SK-N-SH (cell line): ENCODE measurements at regions of chr3 and their contacts with region 1.

Region 1: DNA sequence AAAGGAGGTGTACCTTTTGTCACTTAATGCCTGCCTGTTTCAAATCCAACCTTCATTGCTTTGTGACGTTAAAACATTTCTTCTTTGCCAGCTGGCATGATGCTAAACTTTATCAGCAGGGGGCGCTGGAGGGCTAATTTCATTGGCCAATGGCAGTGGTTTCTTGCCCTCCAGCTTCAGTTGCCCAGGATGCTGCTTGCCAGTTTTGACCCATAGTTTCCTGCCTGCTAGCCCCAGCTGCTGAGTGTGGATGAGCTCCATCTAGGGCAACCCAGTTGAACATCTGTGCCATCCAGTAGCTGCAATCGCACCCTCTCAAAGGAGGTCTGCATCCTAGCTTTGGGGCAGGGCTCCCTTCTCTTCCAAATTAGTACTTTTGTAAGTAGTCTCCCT is 22.1 kb downstream of the ACKR2 start:
- DNase-seq: peak; percentile 57
- H3K4me3 ChIP-seq: peak overlapping the region in 1 of 2 experiments; percentile 28; a peak in 1 of 4 replicates
- H3K27ac ChIP-seq: no peak overlapping the region
- H3K4me1 ChIP-seq: peaks cover 0 to 3% of the 10 kb centered on the region in 2 experiments; a peak in 2 of 4 replicates
- H3K27me3 ChIP-seq: no peaks in the 10 kb centered on the region; the same call in 1 of the 2 replicates
- CTCF ChIP-seq: peak; percentile 80
- EP300 ChIP-seq: no peak
- RAD21 ChIP-seq: peak; percentile 75

Region 2: DNA sequence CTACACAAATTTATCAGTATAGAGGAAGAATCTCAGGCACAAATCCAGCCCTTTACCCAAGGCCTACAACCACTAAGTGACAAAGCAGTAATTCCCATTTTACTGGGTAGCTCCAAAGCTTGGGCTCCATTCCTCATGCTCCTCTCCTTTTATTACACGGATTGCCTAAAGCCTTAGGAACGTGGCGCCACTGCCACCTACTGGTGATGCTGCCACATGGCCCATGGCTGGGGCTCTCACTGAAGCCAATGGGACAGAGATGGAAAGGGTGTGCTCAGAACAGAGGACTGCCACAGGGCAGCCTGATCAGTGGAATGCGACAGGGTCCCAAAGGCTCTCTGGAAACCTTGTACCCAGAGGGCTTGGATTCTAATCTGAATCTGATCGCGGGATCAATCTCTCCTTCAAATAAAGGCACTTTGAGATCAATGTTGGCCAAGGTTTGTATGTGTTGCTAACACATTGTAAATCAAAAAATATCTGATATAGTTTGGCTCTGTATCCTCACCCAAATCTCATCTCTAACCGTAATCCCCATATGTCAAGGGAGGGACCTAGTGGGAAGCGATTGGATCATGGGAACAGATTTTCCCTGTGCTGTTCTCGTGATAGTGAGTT is 387.4 kb before region 1 on chr3:
- CTCF ChIA-PET with region 1: no interaction called
- POLR2A ChIA-PET with region 1: no interaction called
- DNase-seq: peak; percentile 85
- H3K4me3 ChIP-seq: peak overlapping the region in 1 of 2 experiments; percentile 42; a peak in 1 of 4 replicates
- H3K27ac ChIP-seq: no peak overlapping the region
- H3K4me1 ChIP-seq: peaks cover 0 to 5% of the 10 kb centered on the region in 2 experiments; a peak in 1 of 4 replicates
- H3K27me3 ChIP-seq: peaks cover 5% of the 10 kb centered on the region; the same call in 1 of the 2 replicates
- CTCF ChIP-seq: peak; percentile 96
- EP300 ChIP-seq: no peak
- RAD21 ChIP-seq: peak; percentile 97

Region 3: DNA sequence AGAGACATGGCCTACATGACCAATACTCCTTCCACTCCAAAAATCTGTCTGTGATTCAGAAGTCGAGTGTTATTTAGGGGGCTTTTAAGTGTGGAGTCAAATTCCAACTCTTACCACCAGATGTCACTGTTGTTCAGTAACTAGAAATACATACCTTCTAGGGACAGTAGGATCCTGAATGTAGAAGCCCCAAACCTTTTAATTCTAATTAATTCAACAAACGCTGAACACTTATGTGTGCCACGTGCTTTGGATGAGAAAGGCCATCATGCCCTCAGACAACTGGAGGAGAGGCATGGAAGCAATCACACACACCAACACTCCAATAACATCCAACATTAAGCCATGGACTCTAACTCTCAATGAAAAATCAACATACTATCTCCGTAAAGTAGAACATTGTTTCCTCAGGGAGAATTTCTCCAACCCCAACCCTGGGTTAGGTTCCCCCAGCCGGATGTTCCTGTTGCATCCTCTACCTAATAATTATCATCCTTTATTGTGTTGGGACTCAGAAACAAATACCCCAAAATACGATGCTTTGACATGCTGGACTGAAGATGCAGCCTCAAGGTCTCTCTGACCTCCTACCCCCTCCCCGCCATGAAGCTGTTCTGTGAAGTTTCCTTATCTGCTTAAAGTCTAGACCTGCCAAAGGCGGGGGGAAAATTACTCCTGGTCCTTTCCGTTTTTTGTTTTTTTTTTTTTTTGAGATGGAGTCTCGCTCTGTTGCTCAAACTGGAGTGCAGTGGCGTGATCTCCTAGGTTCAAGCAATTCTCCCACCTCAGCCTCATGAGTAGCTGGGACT is 50.2 kb before region 1 on chr3:
- CTCF ChIA-PET with region 1: interaction called, 63 read pairs
- POLR2A ChIA-PET with region 1: no interaction called
- DNase-seq: peak; percentile 70
- H3K4me3 ChIP-seq: no peak overlapping the region; a peak in 1 of 4 replicates
- H3K27ac ChIP-seq: no peak overlapping the region
- H3K4me1 ChIP-seq: no peaks in the 10 kb centered on the region
- H3K27me3 ChIP-seq: no peaks in the 10 kb centered on the region
- CTCF ChIP-seq: peak; percentile 79
- EP300 ChIP-seq: no peak
- RAD21 ChIP-seq: peak; percentile 79

Region 4: GRCh38 chr3:42819351-42819965 is 11.9 kb before region 1 on chr3:
- CTCF ChIA-PET with region 1: interaction called, 38 read pairs
- POLR2A ChIA-PET with region 1: no interaction called
- DNase-seq: peak; percentile 54
- H3K4me3 ChIP-seq: no peak overlapping the region
- H3K27ac ChIP-seq: peak overlapping the region; percentile 12 to 64; a peak in 2 of 4 replicates
- H3K4me1 ChIP-seq: peaks cover 0 to 11% of the 10 kb centered on the region in 2 experiments; a peak in 2 of 4 replicates
- H3K27me3 ChIP-seq: no peaks in the 10 kb centered on the region
- CTCF ChIP-seq: peak; percentile 28; the same call in 1 of the 2 replicates
- EP300 ChIP-seq: no peak
- RAD21 ChIP-seq: no peak

Region 5: DNA sequence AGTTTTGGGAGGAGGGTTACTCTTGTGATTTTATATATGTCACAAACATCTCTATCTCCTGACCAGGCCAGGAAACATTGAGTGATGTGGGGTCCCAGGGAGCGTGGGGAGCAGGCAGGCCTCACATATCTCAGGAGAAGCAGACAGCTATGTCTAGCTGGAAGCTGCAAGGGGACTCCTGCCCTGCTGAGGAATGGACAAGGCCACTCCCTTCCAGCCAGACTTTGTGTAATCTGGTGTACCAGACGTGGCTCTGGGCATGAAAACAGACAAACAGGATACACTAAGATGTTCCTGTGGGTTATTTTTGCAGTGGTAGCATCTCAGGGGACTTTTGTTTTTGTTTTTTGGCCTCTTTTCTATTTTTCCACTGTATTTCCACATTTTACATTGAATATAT is 21.1 kb after region 1 on chr3:
- CTCF ChIA-PET with region 1: interaction called, 12 read pairs
- POLR2A ChIA-PET with region 1: no interaction called
- DNase-seq: peak; percentile 23
- H3K4me3 ChIP-seq: no peak overlapping the region
- H3K27ac ChIP-seq: peak overlapping the region in 1 of 2 experiments; percentile 69; a peak in 2 of 4 replicates
- H3K4me1 ChIP-seq: peaks cover 0 to 15% of the 10 kb centered on the region in 2 experiments; a peak in 1 of 4 replicates
- H3K27me3 ChIP-seq: peaks cover 8% of the 10 kb centered on the region; the same call in 1 of the 2 replicates
- CTCF ChIP-seq: no peak
- EP300 ChIP-seq: no peak
- RAD21 ChIP-seq: no peak

Region 6: DNA sequence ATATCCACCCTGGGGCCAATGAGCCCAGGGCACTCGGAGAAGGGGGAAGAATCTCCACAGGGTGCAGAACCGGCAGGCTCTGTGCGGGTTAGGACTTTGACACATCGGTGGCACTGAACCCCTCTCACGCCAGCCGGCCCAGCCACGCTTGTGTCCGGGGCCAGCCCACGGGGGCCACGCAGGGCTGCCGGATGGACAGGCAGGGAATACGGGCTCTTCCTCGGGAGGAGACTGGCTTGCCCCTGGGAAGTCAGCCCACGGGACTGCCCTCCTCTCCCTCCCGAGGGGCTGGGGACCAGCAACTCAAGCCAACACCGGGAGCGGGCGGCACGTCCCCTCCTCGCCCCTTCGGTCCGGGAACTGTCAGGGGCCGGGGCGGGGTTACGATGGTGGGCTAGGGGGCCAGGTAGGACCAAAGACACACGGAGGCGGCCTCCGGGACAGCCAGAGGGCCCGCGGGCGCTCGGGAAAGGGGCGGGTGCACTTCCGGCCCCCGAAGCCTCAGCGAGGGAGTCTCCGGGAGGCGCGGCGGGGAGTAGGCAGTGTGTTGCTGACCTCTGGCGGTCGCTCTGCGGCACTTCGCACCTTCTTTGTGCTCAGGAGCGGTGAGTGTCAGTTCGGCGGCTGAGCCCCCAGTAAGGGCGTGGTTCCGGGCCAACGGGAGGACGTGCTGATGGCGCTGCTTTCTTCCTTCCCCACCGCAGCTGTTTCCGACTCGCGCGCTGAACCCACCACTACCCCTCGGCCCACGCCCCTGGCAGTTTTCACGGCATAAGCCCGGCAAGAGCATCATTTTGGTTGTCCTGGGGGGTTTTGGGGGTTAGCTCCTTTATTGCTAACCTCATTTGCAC is 49.5 kb after region 1 on chr3:
- CTCF ChIA-PET with region 1: interaction called, 38 read pairs
- POLR2A ChIA-PET with region 1: no interaction called
- DNase-seq: peak; percentile 93
- H3K4me3 ChIP-seq: peak overlapping the region; percentile 55 to 57
- H3K27ac ChIP-seq: no peak overlapping the region
- H3K4me1 ChIP-seq: peaks cover 0 to 10% of the 10 kb centered on the region in 2 experiments; a peak in 1 of 4 replicates
- H3K27me3 ChIP-seq: no peaks in the 10 kb centered on the region
- CTCF ChIP-seq: peak; percentile 78
- EP300 ChIP-seq: no peak
- RAD21 ChIP-seq: peak; percentile 90